Cardiac septum (tissue), 1 donor: ENCODE measurements at regions of chr7 and their contacts with region 1.

Region 1: DNA sequence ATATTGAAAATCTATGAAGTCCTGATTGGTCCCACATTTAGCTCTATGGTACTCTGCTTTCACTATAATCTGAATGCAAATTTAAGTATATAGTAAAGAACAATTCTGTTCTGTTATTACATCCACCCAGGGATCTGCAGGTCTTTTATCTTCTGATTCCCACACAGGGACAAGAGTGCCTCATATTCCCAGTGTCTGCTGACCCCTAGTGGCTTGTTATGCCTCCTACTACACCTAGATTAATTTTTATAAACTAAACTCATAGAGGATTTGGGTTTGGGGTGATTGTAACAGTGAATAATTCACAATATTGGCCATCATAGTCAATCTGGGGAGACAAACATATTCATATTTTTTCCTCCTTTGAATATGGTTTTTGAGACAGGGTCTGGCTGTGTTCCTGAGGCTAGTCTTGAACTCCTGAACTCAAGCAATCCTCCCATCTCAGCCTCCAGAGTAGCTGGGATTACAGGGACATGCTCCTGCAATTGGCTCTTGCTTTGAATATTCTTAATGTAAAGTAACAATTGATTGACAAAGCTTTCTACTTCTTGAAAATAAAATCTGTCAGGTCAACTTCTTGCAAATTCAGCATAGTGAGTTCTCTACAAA is 282.1 kb downstream of the KCND2 start:
- DNase-seq: no peak

Region 2: GRCh38 chr7:119270045-119270464 is 1285.0 kb before region 1 on chr7:
- intact Hi-C with region 1: loop called (anchors 10 kb)
- DNase-seq: no peak

Region 3: DNA sequence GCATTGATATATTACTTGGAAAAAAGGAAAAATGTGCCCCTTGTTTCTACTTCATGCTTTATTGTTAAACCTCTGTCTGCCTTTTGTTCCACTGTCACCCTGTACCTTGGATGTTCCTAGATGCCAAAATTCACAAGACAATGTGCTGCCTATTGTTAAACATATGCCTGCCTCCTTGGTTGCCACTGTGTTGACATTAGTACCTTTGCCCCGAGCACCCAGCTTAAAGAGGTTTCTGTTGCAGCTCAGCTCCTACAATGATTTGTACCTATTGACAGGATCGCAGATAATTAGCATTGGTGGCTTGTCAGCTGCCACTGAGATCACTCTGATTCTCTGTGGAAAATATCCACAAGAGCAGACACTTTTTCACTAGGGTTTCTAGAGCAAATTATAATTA is 94.1 kb before region 1 on chr7:
- intact Hi-C with region 1: no loop called
- DNase-seq: no peak

Region 4: DNA sequence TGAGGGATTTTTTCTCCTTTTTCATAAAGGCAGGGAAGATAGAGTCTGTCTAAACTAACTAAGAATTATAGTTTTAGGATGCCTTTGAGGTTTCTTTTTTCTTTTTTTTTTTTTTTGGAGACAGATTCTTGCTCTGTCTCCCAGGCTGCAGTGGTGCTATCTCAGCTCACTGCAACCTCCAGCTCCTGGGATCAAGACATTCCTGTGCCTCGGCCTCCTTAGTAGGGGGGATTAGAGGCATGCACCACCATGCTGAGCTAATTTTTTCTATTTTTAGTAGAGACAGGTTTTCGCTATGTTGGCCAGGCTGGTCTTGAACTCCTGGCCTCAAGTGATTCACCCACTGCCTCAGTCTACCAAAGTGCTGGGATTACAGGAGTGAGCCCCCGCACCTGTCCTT is 42.4 kb before region 1 on chr7:
- intact Hi-C with region 1: loop called (anchors 2 kb)
- DNase-seq: no peak